ENCODE measurements at regions of chr16 and their contacts with region 1.

Region 1: GRCh38 chr16:30335598-30336474 is 19.3 kb downstream of the CD2BP2 start:
- DNase-seq: no peak
- ATAC-seq: no peak
- H3K4me3 Mint-ChIP-seq: peak overlapping the region; percentile 82
- H3K27ac Mint-ChIP-seq: peak overlapping the region; percentile 83
- H3K4me1 Mint-ChIP-seq: peaks cover 42% of the 10 kb centered on the region
- H3K27me3 Mint-ChIP-seq: no peaks in the 10 kb centered on the region
- CTCF ChIP-seq: no peak

Region 2: GRCh38 chr16:30355144-30355894 is 19.5 kb after region 1 on chr16 and contains the start of gene CD2BP2:
- CTCF ChIA-PET with region 1: no interaction called
- POLR2A ChIA-PET with region 1: interaction called, 26 read pairs
- intact Hi-C with region 1: loop called (anchors 1 kb)
- DNase-seq: peak; percentile 81
- ATAC-seq: peak; percentile 84
- H3K4me3 Mint-ChIP-seq: peak within 1 kb of the TSS; percentile 96
- H3K27ac Mint-ChIP-seq: peak within 1 kb of the TSS; percentile 91
- H3K4me1 Mint-ChIP-seq: peaks cover 49% of the 10 kb centered on the region
- H3K27me3 Mint-ChIP-seq: no peaks in the 10 kb centered on the region
- CTCF ChIP-seq: no peak
- total RNA-seq, gene CD2BP2: 87.8 and 88.0 TPM in 2 replicates

Region 3: GRCh38 chr16:30370444-30371247 is 34.8 kb after region 1 on chr16 and contains the start of gene TBC1D10B:
- CTCF ChIA-PET with region 1: no interaction called
- POLR2A ChIA-PET with region 1: interaction called, 14 read pairs
- intact Hi-C with region 1: loop called (anchors 1 kb)
- DNase-seq: peak; percentile 92
- ATAC-seq: peak; percentile 83
- H3K4me3 Mint-ChIP-seq: peak within 1 kb of the TSS; percentile 87
- H3K27ac Mint-ChIP-seq: peak within 1 kb of the TSS; percentile 86
- H3K4me1 Mint-ChIP-seq: peaks cover 52% of the 10 kb centered on the region
- H3K27me3 Mint-ChIP-seq: no peaks in the 10 kb centered on the region
- CTCF ChIP-seq: no peak
- total RNA-seq, gene TBC1D10B: 46.3 and 50.2 TPM in 2 replicates

Region 4: GRCh38 chr16:30378236-30379204 is 42.7 kb after region 1 on chr16:
- CTCF ChIA-PET with region 1: no interaction called
- POLR2A ChIA-PET with region 1: interaction called, 8 read pairs
- intact Hi-C with region 1: loop called (anchors 1 kb)
- DNase-seq: peak; percentile 99
- ATAC-seq: peak; percentile 88
- H3K4me3 Mint-ChIP-seq: peak overlapping the region; percentile 92
- H3K27ac Mint-ChIP-seq: peak overlapping the region; percentile 100
- H3K4me1 Mint-ChIP-seq: peaks cover 62% of the 10 kb centered on the region
- H3K27me3 Mint-ChIP-seq: no peaks in the 10 kb centered on the region
- CTCF ChIP-seq: no peak

Region 5: DNA sequence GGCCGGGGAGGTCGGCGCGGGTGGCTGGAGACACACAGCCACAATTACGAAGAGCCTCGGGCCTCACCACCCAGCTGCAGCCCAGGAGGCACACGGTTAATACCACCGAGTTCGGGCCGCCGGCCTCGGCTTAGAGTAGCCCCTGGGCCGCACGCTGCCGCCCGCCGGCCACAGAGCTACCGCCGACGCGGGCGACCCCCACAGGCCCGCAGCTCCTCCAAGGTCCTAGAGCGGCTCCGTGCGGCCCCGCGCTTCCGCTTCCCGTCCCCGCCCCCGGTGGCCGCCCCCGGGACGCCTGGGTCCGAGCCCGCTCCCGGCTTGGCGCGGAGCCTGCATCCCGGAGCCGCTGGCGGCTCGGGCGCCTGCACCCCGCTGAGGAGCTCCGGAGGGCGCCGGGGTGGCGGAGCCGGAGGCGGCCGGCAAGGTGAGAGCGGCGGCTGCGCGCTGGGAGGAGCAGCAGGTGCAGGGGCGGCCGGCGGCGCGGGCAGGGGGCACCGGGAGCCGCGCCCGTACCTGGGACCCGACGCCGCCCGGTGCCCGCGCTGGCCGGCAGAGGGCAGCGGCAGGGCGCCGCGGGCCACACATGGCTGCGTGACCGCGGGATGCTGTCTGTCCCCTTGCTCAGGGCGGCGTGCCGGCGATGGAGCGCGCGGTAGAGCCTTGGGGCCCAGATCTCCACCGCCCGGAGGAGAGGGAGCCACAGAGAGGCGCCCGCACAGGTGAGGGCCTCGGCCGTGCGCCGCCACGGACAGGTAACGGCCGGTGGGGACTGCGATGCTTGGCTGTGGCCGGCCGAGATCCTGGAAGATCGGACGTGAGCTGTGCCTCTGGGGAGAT is 59.5 kb after region 1 on chr16 and contains the start of gene ZNF48:
- CTCF ChIA-PET with region 1: no interaction called
- POLR2A ChIA-PET with region 1: interaction called, 3 read pairs
- intact Hi-C with region 1: loop called (anchors 1 kb)
- DNase-seq: peak; percentile 77
- ATAC-seq: peak; percentile 96
- H3K4me3 Mint-ChIP-seq: peak within 1 kb of the TSS; percentile 91
- H3K27ac Mint-ChIP-seq: peak within 1 kb of the TSS; percentile 78
- H3K4me1 Mint-ChIP-seq: peaks cover 31% of the 10 kb centered on the region
- H3K27me3 Mint-ChIP-seq: no peaks in the 10 kb centered on the region
- CTCF ChIP-seq: no peak
- total RNA-seq, gene ZNF48: 11.7 and 13.0 TPM in 2 replicates

Region 6: GRCh38 chr16:30407102-30407803 is 71.4 kb after region 1 on chr16 and contains the start of gene ZNF771:
- CTCF ChIA-PET with region 1: interaction called, 3 read pairs
- POLR2A ChIA-PET with region 1: interaction called, 3 read pairs
- intact Hi-C with region 1: loop called (anchors 2 kb)
- DNase-seq: peak; percentile 90
- ATAC-seq: peak; percentile 89
- H3K4me3 Mint-ChIP-seq: peak within 1 kb of the TSS; percentile 89
- H3K27ac Mint-ChIP-seq: peak within 1 kb of the TSS; percentile 90
- H3K4me1 Mint-ChIP-seq: peaks cover 27% of the 10 kb centered on the region
- H3K27me3 Mint-ChIP-seq: no peaks in the 10 kb centered on the region
- CTCF ChIP-seq: no peak
- total RNA-seq, gene ZNF771: 4.4 and 5.2 TPM in 2 replicates

Region 7: GRCh38 chr16:30747799-30748634 is 412.2 kb after region 1 on chr16 and contains the start of gene PHKG2:
- CTCF ChIA-PET with region 1: no interaction called
- POLR2A ChIA-PET with region 1: interaction called, 11 read pairs
- intact Hi-C with region 1: no loop called
- DNase-seq: peak; percentile 90
- ATAC-seq: peak; percentile 98
- H3K4me3 Mint-ChIP-seq: peak within 1 kb of the TSS; percentile 91
- H3K27ac Mint-ChIP-seq: peak within 1 kb of the TSS; percentile 87
- H3K4me1 Mint-ChIP-seq: peaks cover 24% of the 10 kb centered on the region
- H3K27me3 Mint-ChIP-seq: no peaks in the 10 kb centered on the region
- CTCF ChIP-seq: no peak
- total RNA-seq, gene PHKG2: 45.3 and 51.4 TPM in 2 replicates